WTC11 (cell line): ENCODE measurements at regions of chr12 and their contacts with region 1.

Region 1: GRCh38 chr12:7117670-7118069 is 8.7 kb upstream of the C1RL start:
- DNase-seq: no peak
- ATAC-seq: no peak
- H3K4me3 Mint-ChIP-seq: no peak overlapping the region
- H3K27ac Mint-ChIP-seq: no peak overlapping the region
- H3K4me1 Mint-ChIP-seq: peaks cover 4% of the 10 kb centered on the region
- H3K27me3 Mint-ChIP-seq: peaks cover 5% of the 10 kb centered on the region; the same call in 1 of the 2 replicates
- CTCF ChIP-seq: no peak

Region 2: DNA sequence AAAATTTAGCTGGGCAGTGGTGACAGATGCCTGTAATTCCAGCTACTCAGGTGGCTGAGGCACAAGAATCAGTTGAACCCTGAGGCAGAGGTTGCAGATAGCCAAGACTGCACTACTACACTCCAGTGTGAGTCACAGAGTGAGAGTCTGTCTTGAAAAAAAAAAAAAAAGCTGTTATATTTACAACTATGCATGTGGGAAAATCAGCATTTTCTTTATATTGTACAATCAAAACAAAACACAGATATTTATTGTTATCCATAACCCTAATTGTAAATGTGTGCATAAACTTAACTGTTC is 37.9 kb before region 1 on chr12:
- CTCF ChIA-PET with region 1: interaction called, 4 read pairs
- POLR2A ChIA-PET with region 1: interaction called, 10 read pairs
- DNase-seq: no peak
- ATAC-seq: no peak
- H3K4me3 Mint-ChIP-seq: no peak overlapping the region
- H3K27ac Mint-ChIP-seq: no peak overlapping the region
- H3K4me1 Mint-ChIP-seq: no peaks in the 10 kb centered on the region
- H3K27me3 Mint-ChIP-seq: peaks cover 4% of the 10 kb centered on the region; the same call in 1 of the 2 replicates
- CTCF ChIP-seq: no peak